Right ventricle myocardium inferior (tissue), 1 donor: ENCODE measurements at regions of chr16 and their contacts with region 1.

Region 1: DNA sequence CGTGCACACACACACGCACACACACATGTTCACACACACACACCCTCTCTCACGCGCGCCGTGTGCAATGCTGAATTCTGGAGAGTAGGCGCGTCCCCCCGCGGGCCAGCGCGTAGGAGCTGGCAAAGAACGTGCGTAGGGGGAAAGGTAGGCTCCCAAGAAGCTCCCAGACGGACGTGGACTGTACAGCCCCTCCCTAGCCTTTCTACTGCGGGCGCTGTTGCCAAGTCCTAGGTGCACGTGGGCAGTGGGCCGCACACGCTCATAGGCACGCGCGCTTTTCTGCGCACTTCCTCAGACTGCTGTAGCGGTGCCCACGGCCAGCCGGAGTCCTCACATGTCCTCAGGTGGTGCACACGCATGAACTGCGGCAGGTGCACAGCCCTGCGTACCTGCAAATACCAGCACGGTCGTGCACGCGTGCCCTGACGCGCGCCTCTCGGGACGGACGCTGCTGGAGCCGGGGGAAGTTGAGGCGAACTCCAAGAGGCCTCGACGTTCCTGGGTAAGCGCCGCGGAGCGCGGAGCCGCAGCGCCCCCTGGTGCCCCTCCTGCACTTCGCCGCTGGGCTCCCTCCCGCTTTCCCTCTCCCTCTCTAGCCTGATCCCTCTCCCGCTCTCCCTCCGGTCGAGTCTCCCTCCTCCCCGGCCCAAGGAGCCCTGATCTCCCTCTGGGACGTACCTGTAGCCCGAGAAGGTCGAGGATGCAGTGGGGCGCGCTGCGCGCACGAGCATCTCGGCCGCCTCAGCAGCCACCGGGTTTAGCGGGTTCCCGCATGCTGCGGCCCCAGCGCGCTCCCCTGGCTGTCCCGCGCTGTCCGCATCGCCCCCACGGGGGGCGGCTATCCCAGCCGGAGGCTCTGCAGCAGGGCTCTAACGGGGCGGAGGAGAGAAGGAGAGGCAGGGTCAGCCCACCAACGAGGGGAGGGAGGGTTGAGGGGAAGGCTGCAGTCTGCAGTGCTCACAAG is 749 bp downstream of the GRIN2A start:
- DNase-seq: peak; percentile 75
- ATAC-seq: peak; percentile 85

Region 2: DNA sequence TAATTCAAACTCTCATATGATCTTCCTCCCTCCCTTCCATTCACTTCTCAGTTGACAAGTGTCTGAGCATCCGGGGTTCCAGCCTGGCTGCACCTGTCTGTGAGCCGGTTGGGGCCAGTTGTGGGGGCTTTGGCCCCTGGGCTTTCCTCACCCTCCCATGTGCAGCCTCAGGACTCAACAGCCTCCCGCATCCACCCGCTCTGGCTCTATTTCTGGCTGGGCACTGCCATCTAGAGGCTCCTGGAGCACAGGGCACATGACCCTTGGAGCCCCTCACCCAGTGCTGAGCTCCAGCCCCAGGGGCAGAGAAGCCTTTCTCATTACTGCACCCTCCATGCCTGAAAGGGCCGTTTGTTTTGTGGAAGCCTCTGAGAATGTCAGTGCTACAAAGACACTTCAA is 1046.7 kb before region 1 on chr16:
- intact Hi-C with region 1: loop called (anchors 10 kb)
- DNase-seq: no peak
- ATAC-seq: peak; percentile 62

Region 3: DNA sequence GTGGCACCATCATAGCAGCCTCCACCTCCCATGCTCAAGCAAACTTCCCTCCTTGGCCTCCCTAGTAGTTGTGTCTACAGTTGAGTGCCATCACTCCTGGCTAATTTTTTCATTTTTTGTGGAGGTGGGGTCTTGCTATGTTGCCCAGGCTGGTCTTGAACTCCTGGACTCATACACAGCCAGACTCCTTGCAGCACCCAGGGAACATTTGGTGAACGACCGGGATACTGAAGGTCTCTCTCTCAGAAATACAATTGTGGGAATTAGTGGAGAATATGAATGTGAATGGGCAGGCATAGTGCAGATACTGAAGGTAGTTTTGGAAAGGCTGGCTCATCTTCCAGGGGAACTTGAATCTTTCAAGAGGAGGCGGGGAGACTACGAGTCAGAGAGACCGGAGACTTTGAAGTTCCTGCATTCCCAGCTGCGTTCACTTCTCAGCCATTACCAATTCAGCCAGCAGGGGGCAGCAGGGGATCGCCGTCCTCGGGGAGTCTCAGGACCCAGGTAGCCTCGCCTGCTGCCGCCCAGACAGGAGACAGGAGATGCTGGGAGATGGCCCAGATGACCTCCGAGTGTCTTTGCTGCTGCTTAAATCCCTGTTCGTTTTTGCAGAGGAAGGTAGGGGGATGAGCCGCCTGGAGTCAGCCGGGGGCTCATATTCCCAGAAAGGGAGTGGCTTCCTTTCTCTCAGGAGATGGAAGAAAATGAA is 1021.5 kb before region 1 on chr16:
- intact Hi-C with region 1: loop called (anchors 5 kb)
- DNase-seq: no peak
- ATAC-seq: peak; percentile 42

Region 4: GRCh38 chr16:9258423-9259051 is 922.9 kb before region 1 on chr16:
- intact Hi-C with region 1: loop called (anchors 2 kb)
- DNase-seq: no peak
- ATAC-seq: peak; percentile 46

Region 5: GRCh38 chr16:9647981-9648712 is 533.3 kb before region 1 on chr16:
- intact Hi-C with region 1: loop called (anchors 5 kb)
- DNase-seq: no peak
- ATAC-seq: peak; percentile 46

Region 6: DNA sequence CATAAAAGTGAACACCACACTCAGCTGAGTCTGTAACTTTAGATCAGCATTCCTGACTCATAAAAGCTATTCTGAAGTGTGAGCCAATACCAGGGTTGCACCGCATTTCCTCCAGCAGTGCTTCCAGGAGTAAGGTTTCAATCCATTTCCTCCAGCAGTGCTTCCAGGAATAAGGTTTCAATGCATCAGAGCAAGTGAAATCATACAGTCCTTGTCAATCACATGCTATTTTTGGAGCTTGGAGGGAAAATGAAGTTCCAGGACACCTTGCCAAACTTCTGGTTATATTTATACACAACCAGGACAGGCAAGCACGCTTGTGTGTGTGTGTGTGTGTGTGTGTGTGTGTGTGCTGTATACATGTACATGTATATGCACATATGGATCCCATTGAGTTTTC is 326.8 kb before region 1 on chr16:
- intact Hi-C with region 1: loop called (anchors 5 kb)
- DNase-seq: no peak
- ATAC-seq: peak; percentile 80